PC-9 (cell line): ENCODE measurements at regions of chr2 and their contacts with region 1.

Region 1: DNA sequence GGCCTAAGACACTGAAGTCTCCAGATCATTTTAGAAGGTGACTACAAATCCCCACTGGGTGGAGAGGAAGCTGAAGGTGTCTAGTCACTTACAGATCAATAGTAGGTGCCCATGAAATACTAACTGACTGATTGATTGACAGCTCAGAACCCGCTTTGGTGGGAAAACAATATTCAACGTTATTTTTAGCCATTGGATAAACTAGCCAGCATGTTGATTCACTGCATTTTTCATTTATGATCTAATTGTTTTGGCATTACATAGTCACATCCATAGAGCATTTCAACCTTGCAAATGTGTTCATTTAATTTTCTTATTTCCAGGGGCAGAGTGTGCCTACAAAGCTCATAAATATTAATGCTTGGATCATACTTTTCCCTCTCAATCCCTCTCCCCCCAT is 162.3 kb downstream of the MREG start:
- DNase-seq: peak in 1 of 2 experiments; percentile 51
- H3K4me3 ChIP-seq: no peak overlapping the region
- H3K27ac ChIP-seq: peak overlapping the region; percentile 2; the same call in 1 of the 2 replicates
- H3K4me1 ChIP-seq: peaks cover 12% of the 10 kb centered on the region
- H3K27me3 ChIP-seq: no peaks in the 10 kb centered on the region
- CTCF ChIP-seq: no peak

Region 2: DNA sequence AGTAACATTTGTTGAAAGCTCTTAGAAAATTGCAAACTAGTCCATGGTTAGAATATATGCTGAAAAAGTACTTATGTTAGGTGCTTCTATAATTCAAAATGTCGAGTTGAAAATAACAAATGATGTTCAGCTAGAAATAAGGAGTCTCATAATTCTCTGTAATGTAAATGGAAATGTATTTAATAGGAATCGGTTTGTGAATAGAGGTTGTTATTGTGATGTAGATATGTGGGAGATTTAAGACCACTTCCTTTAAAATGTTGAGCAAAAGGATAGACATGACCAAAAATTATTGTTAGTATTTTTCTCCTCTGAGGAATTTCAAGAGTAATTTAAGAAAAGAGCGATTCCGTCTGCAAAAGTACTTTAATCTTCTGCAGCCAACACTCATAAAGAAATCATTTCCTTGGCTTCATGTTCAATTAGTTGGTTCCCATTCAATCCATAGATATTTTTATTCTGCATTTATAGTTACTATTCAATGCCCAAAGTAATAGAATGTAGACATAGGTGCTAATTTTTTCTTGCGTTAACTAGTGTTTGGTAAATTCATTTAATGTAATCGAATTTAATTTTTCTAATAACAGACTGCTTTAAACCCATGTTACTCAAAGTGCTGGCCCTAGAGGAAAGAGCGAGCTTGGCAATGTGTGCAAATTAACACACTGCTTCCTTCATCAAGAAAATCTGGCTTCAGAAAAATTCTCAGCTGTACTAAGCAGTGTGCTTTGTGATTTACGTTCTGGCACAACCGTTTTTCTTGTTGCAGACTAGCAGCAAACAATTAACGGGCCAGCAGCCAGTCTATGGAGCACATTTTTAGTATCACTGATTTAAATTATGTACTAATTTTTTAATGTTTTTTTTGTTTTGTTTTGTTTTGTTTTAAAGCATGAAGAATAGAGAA is 447.4 kb before region 1 on chr2:
- CTCF ChIA-PET with region 1: no interaction called
- POLR2A ChIA-PET with region 1: interaction called, 13 read pairs
- intact Hi-C with region 1: no loop called
- DNase-seq: no peak
- H3K4me3 ChIP-seq: no peak overlapping the region
- H3K27ac ChIP-seq: no peak overlapping the region
- H3K4me1 ChIP-seq: no peaks in the 10 kb centered on the region
- H3K27me3 ChIP-seq: no peaks in the 10 kb centered on the region
- CTCF ChIP-seq: no peak